Activated CD4-positive, alpha-beta T cell treated with anti-CD3 and anti-CD28 coated beads for 36 hours (primary cell): ENCODE measurements at regions of chr17 and their contacts with region 1.

Region 1: GRCh38 chr17:2828397-2829038 is 32.3 kb downstream of the RAP1GAP2 start:
- DNase-seq: peak; percentile 89
- ATAC-seq: peak; percentile 88
- H3K4me3 Mint-ChIP-seq: no peak overlapping the region
- H3K27ac Mint-ChIP-seq: no peak overlapping the region
- H3K4me1 Mint-ChIP-seq: peaks cover 12% of the 10 kb centered on the region
- H3K27me3 Mint-ChIP-seq: no peaks in the 10 kb centered on the region

Region 2: GRCh38 chr17:2718150-2718938 is 110.2 kb before region 1 on chr17:
- CTCF ChIA-PET with region 1: no interaction called
- POLR2A ChIA-PET with region 1: no interaction called
- intact Hi-C with region 1: no loop called
- DNase-seq: peak; percentile 33
- ATAC-seq: no peak
- H3K4me3 Mint-ChIP-seq: no peak overlapping the region
- H3K27ac Mint-ChIP-seq: no peak overlapping the region
- H3K4me1 Mint-ChIP-seq: peaks cover 15% of the 10 kb centered on the region
- H3K27me3 Mint-ChIP-seq: no peaks in the 10 kb centered on the region

Region 3: GRCh38 chr17:2755891-2756724 is 72.4 kb before region 1 on chr17:
- CTCF ChIA-PET with region 1: no interaction called
- POLR2A ChIA-PET with region 1: no interaction called
- intact Hi-C with region 1: no loop called
- DNase-seq: no peak
- ATAC-seq: no peak
- H3K4me3 Mint-ChIP-seq: no peak overlapping the region
- H3K27ac Mint-ChIP-seq: no peak overlapping the region
- H3K4me1 Mint-ChIP-seq: peaks cover 3% of the 10 kb centered on the region
- H3K27me3 Mint-ChIP-seq: peaks cover 41% of the 10 kb centered on the region

Region 4: DNA sequence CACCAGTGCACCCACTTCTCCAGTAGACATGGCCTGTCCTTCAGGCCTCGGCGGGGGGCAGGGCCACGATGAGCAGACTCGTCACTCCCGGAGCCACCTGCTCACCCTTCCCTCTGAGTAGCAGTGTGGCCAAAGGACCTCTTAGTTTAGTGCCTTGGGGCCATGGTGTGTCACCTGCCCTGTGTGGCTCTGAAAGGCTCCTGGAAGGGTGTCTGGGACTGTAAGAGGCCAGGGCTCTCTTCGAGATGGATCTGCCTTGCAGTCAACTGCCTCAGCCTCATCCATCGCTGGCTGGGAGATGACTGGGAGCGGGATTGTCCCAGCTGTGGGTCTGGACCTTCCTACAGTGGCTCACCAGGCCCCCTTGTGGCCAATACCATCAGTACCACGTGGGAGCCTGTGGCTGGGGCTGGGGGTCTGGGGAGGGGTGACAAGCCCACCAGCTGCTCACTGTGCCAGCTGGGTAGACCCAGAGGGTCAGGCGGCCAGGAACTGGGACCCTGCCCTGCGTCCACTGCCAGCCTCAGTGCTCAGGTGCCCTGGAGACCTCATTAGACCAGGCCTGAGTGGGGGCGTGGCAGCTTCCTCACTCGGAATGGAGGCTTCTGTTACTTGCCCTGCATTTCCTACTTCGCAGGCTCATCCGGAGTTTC is 101.5 kb after region 1 on chr17:
- CTCF ChIA-PET with region 1: interaction called, 5 read pairs
- POLR2A ChIA-PET with region 1: no interaction called
- intact Hi-C with region 1: loop called in 1 of 2 experiments (anchors 1 kb)
- DNase-seq: peak; percentile 59
- ATAC-seq: peak; percentile 57
- H3K4me3 Mint-ChIP-seq: no peak overlapping the region
- H3K27ac Mint-ChIP-seq: no peak overlapping the region
- H3K4me1 Mint-ChIP-seq: peaks cover 10% of the 10 kb centered on the region
- H3K27me3 Mint-ChIP-seq: no peaks in the 10 kb centered on the region

Region 5: DNA sequence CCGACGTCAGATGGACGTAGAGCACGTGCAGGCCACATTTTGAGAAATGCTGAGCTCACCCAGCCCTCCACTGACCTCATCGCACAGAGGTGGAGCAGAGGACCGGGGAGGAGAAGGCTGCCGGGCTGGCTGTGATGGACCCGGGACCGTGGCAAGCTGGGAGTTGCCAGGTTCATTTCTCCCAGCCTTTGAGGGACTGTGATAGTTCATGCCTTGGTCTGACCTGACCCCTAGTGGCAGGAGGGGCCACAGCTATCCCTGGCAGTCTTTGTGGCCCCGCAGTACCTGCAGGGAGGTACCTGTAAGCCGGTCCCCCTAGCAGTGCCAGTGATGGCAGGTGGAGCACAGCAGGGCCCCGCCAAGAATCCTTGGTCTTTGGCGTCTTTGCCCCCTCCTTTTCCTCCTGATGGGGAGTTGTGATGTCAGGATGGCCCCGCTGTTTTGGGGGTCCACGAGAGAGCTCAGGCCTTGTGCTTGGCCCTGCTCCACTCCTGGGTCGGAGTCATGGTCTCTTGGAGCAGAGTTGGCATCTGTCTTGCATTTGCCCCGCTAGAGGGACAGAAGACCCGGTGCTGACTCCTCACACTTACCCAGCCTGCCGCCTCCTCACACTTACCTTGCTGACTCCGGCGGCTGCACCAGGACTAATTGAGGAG is 184.5 kb after region 1 on chr17:
- CTCF ChIA-PET with region 1: interaction called, 9 read pairs
- POLR2A ChIA-PET with region 1: no interaction called
- intact Hi-C with region 1: loop called (anchors 1 kb)
- DNase-seq: peak; percentile 78
- ATAC-seq: peak; percentile 87
- H3K4me3 Mint-ChIP-seq: no peak overlapping the region
- H3K27ac Mint-ChIP-seq: no peak overlapping the region
- H3K4me1 Mint-ChIP-seq: no peaks in the 10 kb centered on the region
- H3K27me3 Mint-ChIP-seq: no peaks in the 10 kb centered on the region